ENCODE measurements at regions of chr17 and their contacts with region 1.

Region 1: DNA sequence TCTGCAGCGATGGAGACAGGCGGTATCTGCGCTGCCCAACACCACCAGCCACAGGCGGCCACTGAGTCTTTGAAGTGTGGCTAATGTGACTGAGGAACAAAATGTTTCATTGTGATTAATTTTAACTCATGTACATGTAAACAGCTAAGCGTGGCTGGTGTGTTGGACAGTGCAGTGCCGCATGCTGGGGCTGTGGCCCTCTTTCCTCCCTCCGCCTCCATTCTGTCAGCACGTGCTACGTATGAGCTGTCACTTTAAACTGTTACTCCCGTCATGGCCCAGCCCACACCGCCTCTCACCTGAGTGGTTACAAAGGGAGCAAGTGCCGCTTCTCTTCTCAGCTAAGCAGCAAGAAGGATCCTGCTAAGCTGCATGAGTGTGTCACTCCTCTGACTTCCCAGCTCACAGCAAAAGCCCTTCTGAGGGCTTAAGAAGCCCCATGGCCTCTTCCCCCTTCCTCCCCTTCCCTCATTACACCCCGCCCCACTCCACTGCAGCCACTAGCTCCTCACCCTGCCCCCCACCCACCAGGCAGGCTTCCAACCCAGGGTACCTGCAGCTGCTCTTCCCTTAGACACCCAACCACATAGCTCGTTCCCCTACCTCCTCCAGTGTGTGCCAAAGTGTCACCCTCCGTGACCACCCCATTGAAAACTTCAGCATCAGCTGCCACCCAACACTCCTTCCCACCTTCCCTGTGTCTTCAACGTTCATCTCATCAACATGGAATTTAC is 15.0 kb downstream of the HASPIN start:
- DNase-seq: peak; percentile 46 to 85 (median 57)
- H3K4me3 ChIP-seq: no peak overlapping the region
- H3K4me3 Mint-ChIP-seq: peak overlapping the region; percentile 6 to 84 (median 49)
- H3K27ac ChIP-seq: no peak overlapping the region
- H3K27ac Mint-ChIP-seq: peak overlapping the region; percentile 68 to 98 (median 92)
- H3K4me1 ChIP-seq: peaks cover 30% of the 10 kb centered on the region
- H3K4me1 Mint-ChIP-seq: peaks cover 33 to 45% (median 43%) of the 10 kb centered on the region in 3 donors
- H3K27me3 ChIP-seq: no peaks in the 10 kb centered on the region
- H3K27me3 Mint-ChIP-seq: peaks cover 0 to 4% of the 10 kb centered on the region in 2 donors

Region 2: DNA sequence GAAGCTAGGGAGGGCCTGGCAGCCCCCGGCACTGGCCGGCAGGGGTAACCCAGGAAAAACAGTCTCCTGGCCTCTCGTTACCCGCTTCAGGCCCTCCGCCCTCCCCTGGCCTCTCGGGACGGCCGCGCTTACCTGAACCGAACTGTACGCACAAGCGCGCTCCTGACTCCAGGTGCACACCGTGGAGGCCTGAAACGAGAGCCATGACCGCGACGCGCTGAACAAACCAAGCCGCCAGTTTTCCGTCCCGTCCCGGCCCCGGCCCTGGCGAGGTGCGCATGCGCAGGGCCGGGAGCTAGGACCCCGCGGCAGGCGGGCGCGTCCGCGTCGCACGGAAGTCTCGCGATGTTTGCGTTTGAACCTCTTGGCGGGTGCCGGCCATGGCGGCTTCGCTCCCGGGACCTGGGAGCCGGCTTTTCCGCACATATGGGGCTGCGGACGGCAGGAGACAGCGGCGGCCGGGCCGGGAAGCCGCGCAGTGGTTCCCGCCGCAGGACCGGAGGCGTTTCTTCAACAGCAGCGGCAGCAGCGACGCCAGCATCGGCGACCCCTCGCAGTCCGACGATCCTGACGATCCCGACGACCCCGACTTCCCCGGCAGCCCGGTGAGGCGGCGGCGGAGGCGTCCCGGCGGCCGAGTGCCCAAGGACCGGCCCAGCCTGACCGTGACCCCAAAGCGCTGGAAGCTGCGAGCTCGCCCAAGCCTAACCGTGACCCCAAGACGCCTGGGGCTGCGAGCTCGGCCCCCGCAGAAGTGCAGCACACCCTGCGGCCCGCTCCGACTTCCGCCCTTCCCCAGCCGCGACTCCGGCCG is 15.0 kb before region 1 on chr17 and contains the start of gene HASPIN:
- CTCF ChIA-PET with region 1: interaction called, 23 read pairs
- POLR2A ChIA-PET with region 1: interaction called, 4 read pairs
- DNase-seq: peak; percentile 88 to 94 (median 90)
- H3K4me3 ChIP-seq: peak within 1 kb of the TSS; percentile 68
- H3K4me3 Mint-ChIP-seq: peak within 1 kb of the TSS; percentile 92 to 98 (median 94)
- H3K27ac ChIP-seq: peak within 1 kb of the TSS; percentile 29
- H3K27ac Mint-ChIP-seq: peak within 1 kb of the TSS; percentile 48 to 96 (median 92)
- H3K4me1 ChIP-seq: peaks cover 18% of the 10 kb centered on the region
- H3K4me1 Mint-ChIP-seq: peaks cover 24 to 49% (median 39%) of the 10 kb centered on the region in 3 donors
- H3K27me3 ChIP-seq: no peaks in the 10 kb centered on the region
- H3K27me3 Mint-ChIP-seq: no peaks in the 10 kb centered on the region
- total RNA-seq, gene HASPIN: 16.0 to 16.6 TPM

Region 3: GRCh38 chr17:3762922-3763776 is 24.4 kb after region 1 on chr17:
- CTCF ChIA-PET with region 1: interaction called, 85 read pairs
- POLR2A ChIA-PET with region 1: interaction called, 11 read pairs
- DNase-seq: peak in 3 of 5 donors; percentile 44 to 70 (median 69)
- H3K4me3 ChIP-seq: peak overlapping the region; percentile 44
- H3K4me3 Mint-ChIP-seq: peak overlapping the region; percentile 83 to 100 (median 95)
- H3K27ac ChIP-seq: peak overlapping the region; percentile 68
- H3K27ac Mint-ChIP-seq: peak overlapping the region; percentile 95 to 100 (median 100)
- H3K4me1 ChIP-seq: peaks cover 45% of the 10 kb centered on the region
- H3K4me1 Mint-ChIP-seq: peaks cover 42 to 71% (median 59%) of the 10 kb centered on the region in 3 donors
- H3K27me3 ChIP-seq: no peaks in the 10 kb centered on the region
- H3K27me3 Mint-ChIP-seq: peaks cover 0 to 3% of the 10 kb centered on the region in 2 donors

Region 4: DNA sequence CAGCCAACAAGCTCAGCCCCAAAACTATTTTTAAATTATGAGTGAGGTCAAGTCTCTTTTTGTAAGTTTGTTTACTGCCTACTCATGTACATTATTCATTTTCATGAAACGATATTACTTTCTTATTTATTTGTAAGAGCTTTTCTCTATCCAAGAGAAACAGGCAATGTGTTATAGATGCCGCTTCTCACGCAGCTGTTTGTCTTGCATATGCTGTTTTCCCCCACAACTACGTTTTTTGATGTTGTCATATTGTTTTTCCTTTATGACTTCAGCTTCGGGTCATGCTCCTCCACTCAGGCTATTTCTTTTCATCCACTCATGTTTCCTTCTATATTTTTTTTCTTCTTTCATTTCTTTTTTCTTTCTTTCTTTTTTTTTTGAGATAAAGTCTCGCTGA is 42.3 kb after region 1 on chr17:
- CTCF ChIA-PET with region 1: interaction called, 15 read pairs
- POLR2A ChIA-PET with region 1: interaction called, 4 read pairs
- DNase-seq: no peak
- H3K4me3 ChIP-seq: no peak overlapping the region
- H3K4me3 Mint-ChIP-seq: no peak overlapping the region
- H3K27ac ChIP-seq: no peak overlapping the region
- H3K27ac Mint-ChIP-seq: peak overlapping the region in 1 of 8 donors; percentile 14
- H3K4me1 ChIP-seq: no peaks in the 10 kb centered on the region
- H3K4me1 Mint-ChIP-seq: peaks cover 5 to 16% (median 8%) of the 10 kb centered on the region in 3 donors
- H3K27me3 ChIP-seq: no peaks in the 10 kb centered on the region
- H3K27me3 Mint-ChIP-seq: peaks cover 0 to 1% of the 10 kb centered on the region in 2 donors

Region 5: GRCh38 chr17:3796110-3796821 is 57.5 kb after region 1 on chr17:
- CTCF ChIA-PET with region 1: interaction called, 25 read pairs
- POLR2A ChIA-PET with region 1: interaction called, 7 read pairs
- DNase-seq: peak; percentile 66 to 98 (median 85)
- H3K4me3 ChIP-seq: peak overlapping the region; percentile 34
- H3K4me3 Mint-ChIP-seq: peak overlapping the region; percentile 25 to 82 (median 65)
- H3K27ac ChIP-seq: peak overlapping the region; percentile 22
- H3K27ac Mint-ChIP-seq: peak overlapping the region; percentile 90 to 100 (median 98)
- H3K4me1 ChIP-seq: peaks cover 26% of the 10 kb centered on the region
- H3K4me1 Mint-ChIP-seq: peaks cover 57 to 83% (median 75%) of the 10 kb centered on the region in 3 donors
- H3K27me3 ChIP-seq: no peaks in the 10 kb centered on the region
- H3K27me3 Mint-ChIP-seq: no peaks in the 10 kb centered on the region

Region 6: GRCh38 chr17:3827124-3827773 is 88.5 kb after region 1 on chr17:
- CTCF ChIA-PET with region 1: interaction called, 206 read pairs
- POLR2A ChIA-PET with region 1: interaction called, 9 read pairs
- DNase-seq: peak; percentile 60 to 82 (median 69)
- H3K4me3 ChIP-seq: no peak overlapping the region
- H3K4me3 Mint-ChIP-seq: no peak overlapping the region
- H3K27ac ChIP-seq: no peak overlapping the region
- H3K27ac Mint-ChIP-seq: peak overlapping the region in 3 of 8 donors; percentile 6 to 89 (median 35)
- H3K4me1 ChIP-seq: no peaks in the 10 kb centered on the region
- H3K4me1 Mint-ChIP-seq: peaks cover 0 to 8% (median 5%) of the 10 kb centered on the region in 3 donors
- H3K27me3 ChIP-seq: no peaks in the 10 kb centered on the region
- H3K27me3 Mint-ChIP-seq: no peaks in the 10 kb centered on the region

Region 7: GRCh38 chr17:3845621-3846441 is 107.1 kb after region 1 on chr17 and contains the start of gene NCBP3:
- CTCF ChIA-PET with region 1: interaction called, 96 read pairs
- POLR2A ChIA-PET with region 1: interaction called, 10 read pairs
- DNase-seq: peak; percentile 86 to 91 (median 86)
- H3K4me3 ChIP-seq: peak within 1 kb of the TSS; percentile 71
- H3K4me3 Mint-ChIP-seq: peak within 1 kb of the TSS; percentile 91 to 99 (median 94)
- H3K27ac ChIP-seq: peak within 1 kb of the TSS; percentile 79
- H3K27ac Mint-ChIP-seq: peak within 1 kb of the TSS; percentile 81 to 98 (median 92)
- H3K4me1 ChIP-seq: peaks cover 22% of the 10 kb centered on the region
- H3K4me1 Mint-ChIP-seq: peaks cover 15 to 42% (median 24%) of the 10 kb centered on the region in 3 donors
- H3K27me3 ChIP-seq: no peaks in the 10 kb centered on the region
- H3K27me3 Mint-ChIP-seq: peaks cover 0 to 4% of the 10 kb centered on the region in 2 donors
- total RNA-seq, gene NCBP3: 39.9 to 42.0 TPM